ENCODE measurements at regions of chr11 and their contacts with region 1.

Region 1: DNA sequence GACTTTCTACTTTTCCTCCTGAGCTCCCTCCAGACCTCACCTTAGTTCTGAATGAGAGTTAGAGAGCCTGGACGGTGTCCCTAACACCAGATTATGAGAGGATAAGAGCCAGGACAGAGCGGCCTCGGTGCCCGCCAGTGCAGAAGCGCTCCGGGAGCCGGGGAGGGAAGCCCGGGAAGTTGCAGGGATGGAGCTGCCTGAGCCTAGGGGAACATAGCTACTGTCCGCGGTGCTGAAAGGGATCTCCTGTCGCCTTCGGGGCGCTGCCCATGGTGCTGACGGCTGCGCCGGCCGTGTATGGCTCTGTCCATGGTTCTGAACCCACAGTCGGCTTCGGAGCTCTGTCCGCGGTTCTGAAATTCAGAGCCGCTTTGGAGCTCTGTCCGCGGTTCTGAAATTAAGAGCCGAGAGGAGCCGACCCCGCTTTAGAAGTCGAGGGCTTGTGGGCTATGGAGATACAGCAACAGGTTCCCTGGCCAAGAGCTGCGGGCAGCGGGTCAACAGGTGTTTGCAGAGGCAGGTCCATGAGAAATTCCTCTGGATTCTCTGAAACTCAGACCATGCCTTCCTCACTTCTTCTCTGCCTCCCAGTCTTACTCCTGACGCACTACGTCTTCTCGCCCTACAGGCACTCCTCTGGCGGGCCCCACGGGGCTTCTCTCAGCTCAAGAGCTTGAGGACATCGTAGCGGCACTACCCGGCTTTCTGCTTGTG is 814 bp downstream of the NPAS4 start:
- DNase-seq: peak; percentile 83 to 97 (median 89)
- ATAC-seq: peak; percentile 75 to 91
- H3K4me3 Mint-ChIP-seq: peak overlapping the region in 2 of 10 donors; percentile 24 to 53
- H3K27ac Mint-ChIP-seq: peak overlapping the region in 3 of 10 donors; percentile 11 to 69 (median 64)
- H3K4me1 Mint-ChIP-seq: peaks cover 5 to 13% (median 8%) of the 10 kb centered on the region in 4 donors
- H3K27me3 Mint-ChIP-seq: peaks cover 24 to 41% (median 28%) of the 10 kb centered on the region in 5 donors

Region 2: DNA sequence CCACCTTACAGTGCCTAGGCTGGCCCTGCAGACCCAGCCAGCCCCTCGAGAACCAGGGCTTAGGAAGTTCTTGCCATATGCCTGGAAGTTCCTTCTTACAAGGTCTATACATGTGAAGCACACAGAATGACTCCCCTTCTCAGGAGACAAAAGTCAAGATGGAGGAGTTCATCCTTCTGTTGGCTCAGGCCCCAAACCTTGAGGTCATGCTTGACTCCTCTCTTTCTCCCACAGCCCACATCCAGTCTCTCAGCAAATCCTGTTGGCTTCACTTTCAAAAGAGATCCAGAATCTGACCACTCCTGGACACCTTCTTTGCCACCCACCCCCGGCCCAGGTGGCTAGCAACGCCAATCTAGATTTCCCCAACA is 103.1 kb before region 1 on chr11:
- POLR2A ChIA-PET with region 1: no interaction called
- DNase-seq: no peak
- ATAC-seq: no peak
- H3K4me3 Mint-ChIP-seq: peak overlapping the region; percentile 73 to 97 (median 90)
- H3K27ac Mint-ChIP-seq: peak overlapping the region; percentile 84 to 100 (median 100)
- H3K4me1 Mint-ChIP-seq: peaks cover 42 to 82% (median 66%) of the 10 kb centered on the region in 4 donors
- H3K27me3 Mint-ChIP-seq: no peaks in the 10 kb centered on the region

Region 3: GRCh38 chr11:66438504-66439466 is 17.1 kb after region 1 on chr11 and contains the start of gene MRPL11:
- POLR2A ChIA-PET with region 1: interaction called, 10 read pairs
- DNase-seq: peak; percentile 74 to 95 (median 88)
- ATAC-seq: peak; percentile 96 to 98
- H3K4me3 Mint-ChIP-seq: peak within 1 kb of the TSS; percentile 87 to 96 (median 92)
- H3K27ac Mint-ChIP-seq: peak within 1 kb of the TSS; percentile 24 to 99 (median 98)
- H3K4me1 Mint-ChIP-seq: peaks cover 5 to 16% (median 9%) of the 10 kb centered on the region in 4 donors
- H3K27me3 Mint-ChIP-seq: peaks cover 0 to 6% (median 0%) of the 10 kb centered on the region in 5 donors
- polyA plus RNA-seq, gene MRPL11: 86.9 to 98.2 (median 87.9) TPM

Measured in naive thymus-derived CD8-positive, alpha-beta T cell (primary cell).